ENCODE measurements at regions of chr6 and their contacts with region 1.

Region 1: DNA sequence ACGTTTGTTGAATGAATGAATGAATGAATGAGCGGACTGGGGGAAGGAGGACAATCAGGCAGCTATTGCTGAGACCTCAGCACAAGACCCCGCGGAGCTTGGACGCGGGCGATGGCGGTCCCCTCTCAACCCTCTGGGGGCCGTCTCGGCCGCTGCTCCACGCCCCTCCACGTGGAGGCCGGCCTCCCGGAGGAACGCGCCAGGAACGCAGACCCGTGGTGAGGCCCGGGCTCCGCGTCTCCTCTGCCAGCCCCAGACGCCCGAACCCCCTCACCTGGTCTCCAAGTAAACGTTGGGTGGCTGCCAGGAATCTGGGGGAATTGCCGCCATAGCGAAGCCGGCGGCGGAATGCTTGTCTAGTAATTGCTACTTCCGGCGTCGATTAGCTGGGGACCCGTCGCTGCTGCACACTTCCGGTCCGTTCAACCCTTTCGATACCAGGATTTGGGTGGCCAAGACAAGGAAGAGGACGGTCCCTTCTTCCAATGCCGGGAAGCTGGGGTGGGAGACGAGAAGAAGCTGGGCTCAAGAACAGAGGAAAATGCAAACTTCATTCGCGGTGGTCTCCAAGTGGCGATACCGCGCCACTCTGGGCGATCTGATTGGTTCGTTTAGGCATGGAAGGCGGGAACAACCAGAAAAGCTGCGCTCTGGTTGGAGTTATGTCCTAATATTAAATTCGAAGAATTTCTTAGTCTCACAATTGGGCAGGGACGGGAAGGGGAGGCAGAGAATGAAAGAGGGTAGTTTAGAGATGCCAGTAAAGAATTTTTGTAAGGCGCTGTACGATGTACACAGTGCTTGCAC is at the start of gene PPIL1:
- DNase-seq: peak; percentile 89
- CTCF ChIP-seq: no peak

Region 2: GRCh38 chr6:36839749-36840431 is 34.8 kb before region 1 on chr6:
- CTCF ChIA-PET with region 1: no interaction called
- POLR2A ChIA-PET with region 1: no interaction called
- DNase-seq: peak; percentile 60
- CTCF ChIP-seq: no peak

Region 3: DNA sequence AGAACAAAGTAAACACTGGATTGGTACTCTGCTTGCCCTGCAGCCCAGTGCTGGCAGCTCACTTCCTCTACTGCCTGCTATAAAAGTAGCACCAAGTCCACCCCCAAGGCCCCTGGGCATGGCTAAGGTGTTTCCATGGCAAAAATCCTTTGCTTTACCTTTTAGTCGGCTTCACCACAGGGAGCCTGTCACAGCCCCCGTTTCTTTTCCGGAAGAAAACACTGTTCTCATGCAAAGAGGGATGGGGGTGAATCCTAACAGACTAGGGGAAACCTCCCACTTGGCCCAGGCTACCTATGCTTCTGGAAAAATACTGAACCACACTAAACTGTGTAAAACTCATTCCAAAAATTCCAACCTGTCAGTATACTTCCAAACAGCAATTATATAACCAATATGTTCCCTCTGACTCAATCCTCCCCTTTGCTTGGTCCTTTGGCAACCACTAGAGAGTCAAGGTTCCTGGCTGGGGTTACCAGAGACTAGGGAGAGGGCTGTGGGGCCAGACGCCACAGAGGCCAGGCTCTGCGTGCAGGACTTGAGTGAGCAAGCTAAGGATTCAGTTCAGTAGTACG is 16.2 kb before region 1 on chr6:
- CTCF ChIA-PET with region 1: interaction called, 22 read pairs
- POLR2A ChIA-PET with region 1: no interaction called
- DNase-seq: no peak
- CTCF ChIP-seq: no peak